Activated naive CD4-positive, alpha-beta T cell treated with anti-CD3 and anti-CD28 coated beads for 36 hours (primary cell): ENCODE measurements at regions of chr5 and their contacts with region 1.

Region 1: GRCh38 chr5:15013654-15014463 is 142.3 kb upstream of the ANKH start:
- DNase-seq: no peak
- H3K4me3 Mint-ChIP-seq: no peak overlapping the region
- H3K27ac Mint-ChIP-seq: no peak overlapping the region
- H3K4me1 Mint-ChIP-seq: no peaks in the 10 kb centered on the region
- H3K27me3 Mint-ChIP-seq: no peaks in the 10 kb centered on the region

Region 2: GRCh38 chr5:13987843-13988464 is 1025.9 kb before region 1 on chr5:
- CTCF ChIA-PET with region 1: no interaction called
- intact Hi-C with region 1: loop called (anchors 5 kb)
- DNase-seq: peak; percentile 55
- H3K4me3 Mint-ChIP-seq: no peak overlapping the region
- H3K27ac Mint-ChIP-seq: no peak overlapping the region
- H3K4me1 Mint-ChIP-seq: no peaks in the 10 kb centered on the region
- H3K27me3 Mint-ChIP-seq: no peaks in the 10 kb centered on the region

Region 3: GRCh38 chr5:14685757-14686156 is 328.1 kb before region 1 on chr5:
- CTCF ChIA-PET with region 1: interaction called, 5 read pairs
- intact Hi-C with region 1: loop called (anchors 1 kb)
- DNase-seq: peak; percentile 55
- H3K4me3 Mint-ChIP-seq: peak overlapping the region; percentile 42
- H3K27ac Mint-ChIP-seq: peak overlapping the region; percentile 68
- H3K4me1 Mint-ChIP-seq: peaks cover 14% of the 10 kb centered on the region
- H3K27me3 Mint-ChIP-seq: no peaks in the 10 kb centered on the region

Region 4: GRCh38 chr5:14727428-14727865 is 286.4 kb before region 1 on chr5:
- CTCF ChIA-PET with region 1: interaction called, 17 read pairs
- intact Hi-C with region 1: loop called (anchors 1 kb)
- DNase-seq: peak; percentile 83
- H3K4me3 Mint-ChIP-seq: no peak overlapping the region
- H3K27ac Mint-ChIP-seq: no peak overlapping the region
- H3K4me1 Mint-ChIP-seq: peaks cover 19% of the 10 kb centered on the region
- H3K27me3 Mint-ChIP-seq: no peaks in the 10 kb centered on the region

Region 5: DNA sequence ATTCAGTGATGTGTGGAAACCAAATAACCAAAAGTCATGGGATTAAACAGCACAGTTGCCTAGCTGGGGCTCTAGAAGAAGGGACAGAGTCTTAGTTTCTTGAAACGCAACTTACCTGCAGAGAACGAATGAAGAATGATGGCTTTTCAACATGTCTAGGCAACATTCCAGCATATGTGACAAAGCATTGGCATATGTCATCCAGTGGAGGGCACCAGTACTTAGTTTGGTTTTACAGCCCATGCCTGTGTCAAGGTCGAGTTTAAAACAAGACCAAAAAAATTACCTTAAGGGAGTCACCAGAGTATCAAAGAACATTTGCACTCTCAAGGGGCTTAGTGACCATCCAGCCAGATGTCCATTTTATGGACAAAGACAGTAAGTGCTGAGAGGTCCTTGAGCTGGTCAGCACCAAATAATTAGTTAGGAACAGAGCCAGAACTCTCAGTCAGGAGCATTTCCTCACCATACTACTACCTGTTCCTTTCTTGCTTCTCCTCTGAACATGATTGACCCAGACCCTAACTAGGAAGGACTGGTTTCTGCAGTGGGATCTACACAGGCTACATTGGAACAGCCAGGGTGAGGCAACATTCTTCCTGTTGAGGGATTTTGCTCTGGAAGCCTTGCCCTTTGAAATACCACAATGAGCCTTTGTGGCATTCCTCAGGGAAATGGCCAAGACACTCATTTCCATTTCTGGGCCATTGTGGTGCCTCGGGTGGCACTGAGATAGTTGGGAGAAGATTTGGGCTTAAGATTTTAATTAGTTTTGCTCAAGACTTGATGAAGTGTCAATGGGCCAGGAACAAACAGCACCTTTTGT is 66.8 kb before region 1 on chr5:
- CTCF ChIA-PET with region 1: interaction called, 4 read pairs
- intact Hi-C with region 1: loop called (anchors 1 kb)
- DNase-seq: peak; percentile 59
- H3K4me3 Mint-ChIP-seq: no peak overlapping the region
- H3K27ac Mint-ChIP-seq: peak overlapping the region; percentile 62
- H3K4me1 Mint-ChIP-seq: peaks cover 21% of the 10 kb centered on the region
- H3K27me3 Mint-ChIP-seq: no peaks in the 10 kb centered on the region